Activated CD4-positive, alpha-beta memory T cell treated with anti-CD3 and anti-CD28 coated beads for 36 hours (primary cell): ENCODE measurements at regions of chr14 and their contacts with region 1.

Region 1: DNA sequence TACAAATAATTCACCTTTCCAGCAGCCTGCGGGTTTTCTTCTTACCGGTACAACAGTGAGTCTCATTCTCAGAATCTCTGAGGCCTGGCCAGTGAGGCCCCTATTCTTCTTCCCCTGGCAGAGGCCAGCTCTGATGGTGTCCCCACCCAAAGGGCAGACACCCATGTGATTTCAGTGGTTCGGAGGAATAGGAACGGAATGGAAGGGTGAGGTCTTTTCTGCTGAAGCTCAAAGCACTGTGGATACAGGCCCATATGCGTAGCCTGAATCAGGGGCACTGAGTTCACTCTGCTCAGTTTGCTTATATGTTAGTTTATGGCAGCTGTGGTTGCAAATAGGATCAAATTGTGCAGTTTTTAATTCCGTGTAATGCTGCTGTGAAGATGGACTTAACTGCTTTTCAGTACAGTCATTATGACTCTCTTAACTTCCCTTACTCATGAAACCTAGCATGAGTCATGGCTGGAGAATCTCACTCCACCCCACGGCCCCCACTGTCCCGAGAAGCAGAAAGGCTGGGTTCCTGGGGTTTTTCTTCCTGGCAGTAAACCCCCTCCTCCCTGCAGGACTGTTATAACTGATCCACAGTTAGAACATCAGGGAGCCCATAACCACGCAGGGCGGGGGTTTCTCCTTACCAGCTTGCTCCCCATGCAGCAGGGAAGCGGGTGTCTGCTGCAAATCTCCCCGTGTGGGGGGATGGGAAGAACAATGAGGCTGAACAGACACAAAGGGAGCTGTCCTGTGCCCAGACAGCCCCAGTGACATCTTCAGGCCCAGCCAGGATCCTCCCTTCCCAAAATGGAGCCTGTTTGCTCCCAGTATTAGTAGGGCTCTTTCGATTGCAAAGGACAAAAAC is 122.7 kb downstream of the SLC38A6 start:
- DNase-seq: peak; percentile 71
- H3K4me3 Mint-ChIP-seq: no peak overlapping the region
- H3K27ac Mint-ChIP-seq: peak overlapping the region; percentile 81
- H3K4me1 Mint-ChIP-seq: peaks cover 30% of the 10 kb centered on the region
- H3K27me3 Mint-ChIP-seq: no peaks in the 10 kb centered on the region

Region 2: GRCh38 chr14:60738843-60739508 is 364.7 kb before region 1 on chr14:
- CTCF ChIA-PET with region 1: no interaction called
- POLR2A ChIA-PET with region 1: no interaction called
- intact Hi-C with region 1: no loop called
- DNase-seq: no peak
- H3K4me3 Mint-ChIP-seq: no peak overlapping the region
- H3K27ac Mint-ChIP-seq: no peak overlapping the region
- H3K4me1 Mint-ChIP-seq: peaks cover 20% of the 10 kb centered on the region
- H3K27me3 Mint-ChIP-seq: no peaks in the 10 kb centered on the region

Region 3: GRCh38 chr14:61051051-61051450 is 52.7 kb before region 1 on chr14:
- CTCF ChIA-PET with region 1: no interaction called
- POLR2A ChIA-PET with region 1: no interaction called
- intact Hi-C with region 1: no loop called
- DNase-seq: no peak
- H3K4me3 Mint-ChIP-seq: no peak overlapping the region
- H3K27ac Mint-ChIP-seq: no peak overlapping the region
- H3K4me1 Mint-ChIP-seq: no peaks in the 10 kb centered on the region
- H3K27me3 Mint-ChIP-seq: no peaks in the 10 kb centered on the region

Region 4: DNA sequence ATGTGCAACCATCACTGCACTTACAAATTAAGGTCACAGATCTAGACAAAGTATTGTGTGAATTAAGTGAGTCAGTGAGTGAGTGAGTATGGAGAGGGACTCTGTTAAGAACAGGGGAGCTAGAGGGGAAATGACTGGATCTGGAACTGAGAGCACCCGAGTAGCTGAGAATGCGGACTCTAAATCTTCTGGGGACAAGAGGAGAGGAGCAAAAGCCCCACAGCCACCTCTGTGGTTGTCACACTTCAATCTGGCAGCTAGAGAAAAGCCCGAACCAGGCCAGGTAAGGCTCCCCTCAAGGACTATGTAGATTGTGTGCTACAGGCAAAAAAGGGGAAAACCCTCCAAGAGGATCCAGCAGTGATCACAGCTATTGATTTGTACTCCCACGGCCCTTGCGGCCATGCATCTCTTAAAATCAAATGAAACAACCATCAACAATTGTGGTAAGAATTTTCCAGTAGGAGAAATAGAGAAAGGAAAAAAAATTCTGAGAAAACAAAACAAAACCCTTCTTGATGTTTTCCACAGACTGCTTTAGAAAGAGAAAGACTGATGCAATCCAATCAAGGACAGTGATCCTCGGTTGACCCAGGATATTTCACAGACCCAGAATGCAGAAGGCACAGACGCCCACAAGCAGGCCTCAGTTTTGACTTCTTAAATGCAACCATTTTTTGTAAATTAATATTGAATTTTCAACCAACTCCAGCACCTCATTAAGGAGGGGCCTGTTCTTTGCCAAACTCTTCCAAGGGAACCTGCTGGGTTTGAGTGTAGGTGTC is 13.1 kb before region 1 on chr14:
- CTCF ChIA-PET with region 1: no interaction called
- POLR2A ChIA-PET with region 1: no interaction called
- intact Hi-C with region 1: loop called (anchors 1 kb)
- DNase-seq: peak; percentile 59
- H3K4me3 Mint-ChIP-seq: no peak overlapping the region
- H3K27ac Mint-ChIP-seq: peak overlapping the region; percentile 8
- H3K4me1 Mint-ChIP-seq: peaks cover 10% of the 10 kb centered on the region
- H3K27me3 Mint-ChIP-seq: no peaks in the 10 kb centered on the region

Region 5: GRCh38 chr14:61125867-61126572 is 22.3 kb after region 1 on chr14:
- CTCF ChIA-PET with region 1: no interaction called
- POLR2A ChIA-PET with region 1: no interaction called
- intact Hi-C with region 1: no loop called
- DNase-seq: no peak
- H3K4me3 Mint-ChIP-seq: no peak overlapping the region
- H3K27ac Mint-ChIP-seq: no peak overlapping the region
- H3K4me1 Mint-ChIP-seq: peaks cover 2% of the 10 kb centered on the region
- H3K27me3 Mint-ChIP-seq: peaks cover 7% of the 10 kb centered on the region

Region 6: DNA sequence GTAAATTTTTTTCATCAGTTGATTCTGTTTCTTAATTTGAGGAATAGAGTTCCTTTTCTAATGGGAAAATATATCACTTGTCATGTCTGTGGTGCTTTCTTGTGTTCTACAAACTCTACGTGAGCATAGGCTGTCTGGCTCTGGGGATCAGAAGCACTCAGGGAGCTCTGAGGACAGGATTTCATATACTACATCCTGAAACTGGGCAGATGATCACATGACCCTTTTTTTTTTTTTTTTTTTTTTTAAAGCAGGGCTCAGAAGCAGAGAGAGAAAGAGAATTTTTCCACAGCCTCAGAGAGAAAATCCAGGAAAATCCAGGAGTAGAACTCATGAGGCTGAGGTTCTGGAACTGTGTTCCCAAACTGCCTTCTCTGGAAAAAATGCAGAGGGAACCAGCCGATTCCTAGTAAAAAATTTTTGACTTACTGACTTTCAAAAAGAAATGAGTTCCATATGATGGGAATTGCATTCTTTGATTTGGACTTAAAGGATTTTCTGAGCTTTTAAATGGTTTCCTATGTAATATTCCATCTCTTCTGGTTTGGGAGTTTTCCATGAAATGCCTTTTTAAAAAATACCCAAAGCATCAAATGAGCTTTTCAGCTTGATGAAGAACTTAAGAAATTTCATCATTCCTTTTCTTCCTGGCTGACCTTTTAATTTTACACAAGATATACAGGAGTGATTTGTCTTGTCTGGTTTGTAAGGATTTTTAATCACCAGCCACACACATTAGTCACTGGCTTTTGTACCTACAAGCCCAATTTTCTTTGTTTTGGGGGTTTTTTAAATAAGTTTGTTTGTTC is 408.5 kb after region 1 on chr14:
- CTCF ChIA-PET with region 1: no interaction called
- POLR2A ChIA-PET with region 1: no interaction called
- intact Hi-C with region 1: no loop called
- DNase-seq: no peak
- H3K4me3 Mint-ChIP-seq: peak overlapping the region; percentile 51
- H3K27ac Mint-ChIP-seq: peak overlapping the region; percentile 98
- H3K4me1 Mint-ChIP-seq: peaks cover 95% of the 10 kb centered on the region
- H3K27me3 Mint-ChIP-seq: no peaks in the 10 kb centered on the region